Psoas muscle (tissue), 8 donors: ENCODE measurements at regions of chr15 and their contacts with region 1.

Region 1: GRCh38 chr15:32884146-32884545 is 166.3 kb downstream of the GREM1 start:
- DNase-seq: no peak
- ATAC-seq: no peak
- H3K4me3 ChIP-seq: no peak overlapping the region
- H3K27ac ChIP-seq: no peak overlapping the region
- H3K4me1 ChIP-seq: no peaks in the 10 kb centered on the region
- H3K27me3 ChIP-seq: no peaks in the 10 kb centered on the region
- CTCF ChIP-seq: no peak

Region 2: DNA sequence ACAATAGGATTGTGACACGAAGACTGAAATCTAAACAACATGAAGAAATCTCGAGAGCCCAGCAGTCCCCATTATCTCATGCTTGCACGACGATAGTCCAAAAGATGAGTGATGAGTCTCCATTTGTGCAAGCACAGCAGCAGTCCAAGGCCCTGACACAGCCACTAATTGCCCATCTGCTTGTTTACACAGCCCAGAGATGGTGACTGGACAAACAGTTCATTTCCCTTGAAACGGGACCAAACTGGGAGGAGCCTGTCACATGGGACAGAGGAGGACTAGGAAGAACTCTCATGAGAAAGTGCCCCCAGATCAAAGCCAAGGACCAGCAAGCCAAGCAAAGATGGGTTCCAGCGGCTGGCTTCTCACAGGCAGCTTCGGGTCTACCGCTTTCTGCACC is 45.3 kb before region 1 on chr15:
- intact Hi-C with region 1: no loop called
- DNase-seq: peak; percentile 34 to 59
- ATAC-seq: peak; percentile 20 to 74 (median 35)
- H3K4me3 ChIP-seq: no peak overlapping the region
- H3K27ac ChIP-seq: no peak overlapping the region
- H3K4me1 ChIP-seq: no peaks in the 10 kb centered on the region
- H3K27me3 ChIP-seq: peaks cover 0 to 2% (median 2%) of the 10 kb centered on the region in 3 donors
- CTCF ChIP-seq: no peak

Region 3: DNA sequence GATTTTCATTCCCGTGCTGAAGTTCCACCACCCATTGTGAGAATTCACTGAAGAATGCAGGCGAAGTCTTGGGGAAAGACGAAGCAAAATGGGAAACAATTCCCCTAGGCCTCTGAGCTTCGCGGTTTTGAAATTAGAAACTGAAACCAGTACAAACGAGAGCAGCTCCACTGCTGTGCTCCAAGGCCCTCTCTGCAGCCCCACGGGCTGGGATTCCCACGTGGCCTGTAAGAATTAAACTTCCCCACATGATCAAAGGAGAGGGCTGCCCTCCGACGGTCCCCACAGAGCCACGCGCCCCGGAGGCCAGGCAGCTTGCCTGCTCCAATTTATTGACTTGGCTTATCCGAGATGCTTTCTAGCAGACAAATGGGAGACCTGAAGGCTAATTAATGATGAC is 22.4 kb before region 1 on chr15:
- intact Hi-C with region 1: no loop called
- DNase-seq: peak; percentile 22 to 58
- ATAC-seq: peak in 3 of 4 donors; percentile 33 to 62 (median 36)
- H3K4me3 ChIP-seq: peak overlapping the region; percentile 20
- H3K27ac ChIP-seq: no peak overlapping the region
- H3K4me1 ChIP-seq: no peaks in the 10 kb centered on the region
- H3K27me3 ChIP-seq: no peaks in the 10 kb centered on the region
- CTCF ChIP-seq: no peak

Region 4: DNA sequence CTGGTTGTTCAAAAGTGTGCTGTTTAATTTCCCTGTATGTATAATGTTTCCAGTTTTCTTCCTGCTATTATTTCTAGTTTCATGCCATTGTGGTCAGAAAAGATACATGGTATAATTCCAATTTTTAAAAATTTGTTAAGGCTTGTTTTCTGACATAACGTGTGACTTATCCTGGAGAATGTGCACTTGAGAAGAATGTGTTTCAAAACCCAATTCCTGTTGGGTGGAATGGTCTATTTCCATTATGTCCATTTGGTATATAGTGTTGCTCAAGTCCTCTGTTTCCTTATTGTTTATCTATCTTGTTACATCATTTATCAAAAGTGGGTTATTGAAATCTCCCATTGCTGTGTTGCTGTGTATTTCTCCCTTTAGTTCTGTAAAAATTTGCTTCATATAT is 49.1 kb after region 1 on chr15:
- intact Hi-C with region 1: loop called in 1 of 2 experiments (anchors 2 kb)
- DNase-seq: no peak
- ATAC-seq: no peak
- H3K4me3 ChIP-seq: no peak overlapping the region
- H3K27ac ChIP-seq: no peak overlapping the region
- H3K4me1 ChIP-seq: no peaks in the 10 kb centered on the region
- H3K27me3 ChIP-seq: no peaks in the 10 kb centered on the region
- CTCF ChIP-seq: no peak

Region 5: DNA sequence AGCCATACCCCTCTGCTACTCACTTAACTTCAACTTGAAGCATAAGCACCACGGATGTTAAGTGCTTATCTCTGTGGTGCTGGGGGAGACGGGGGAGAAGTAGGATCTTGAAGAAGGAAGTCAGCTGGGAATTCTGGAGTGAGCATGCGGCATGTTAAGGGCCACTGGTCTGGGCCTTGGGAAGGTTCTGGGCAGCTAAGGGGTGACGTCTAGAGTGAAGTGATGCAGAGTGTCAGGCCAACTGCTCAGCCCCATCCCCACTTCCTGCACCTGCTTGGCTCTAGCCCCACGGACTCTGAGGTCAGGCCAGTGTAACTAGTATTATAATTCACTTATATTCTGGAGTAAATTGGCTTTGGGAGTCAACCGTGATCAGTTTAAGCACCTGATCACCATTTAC is 81.8 kb after region 1 on chr15:
- intact Hi-C with region 1: loop called in 1 of 2 experiments (anchors 10 kb)
- DNase-seq: no peak
- ATAC-seq: no peak
- H3K4me3 ChIP-seq: no peak overlapping the region
- H3K27ac ChIP-seq: no peak overlapping the region
- H3K4me1 ChIP-seq: no peaks in the 10 kb centered on the region
- H3K27me3 ChIP-seq: no peaks in the 10 kb centered on the region
- CTCF ChIP-seq: no peak

Region 6: DNA sequence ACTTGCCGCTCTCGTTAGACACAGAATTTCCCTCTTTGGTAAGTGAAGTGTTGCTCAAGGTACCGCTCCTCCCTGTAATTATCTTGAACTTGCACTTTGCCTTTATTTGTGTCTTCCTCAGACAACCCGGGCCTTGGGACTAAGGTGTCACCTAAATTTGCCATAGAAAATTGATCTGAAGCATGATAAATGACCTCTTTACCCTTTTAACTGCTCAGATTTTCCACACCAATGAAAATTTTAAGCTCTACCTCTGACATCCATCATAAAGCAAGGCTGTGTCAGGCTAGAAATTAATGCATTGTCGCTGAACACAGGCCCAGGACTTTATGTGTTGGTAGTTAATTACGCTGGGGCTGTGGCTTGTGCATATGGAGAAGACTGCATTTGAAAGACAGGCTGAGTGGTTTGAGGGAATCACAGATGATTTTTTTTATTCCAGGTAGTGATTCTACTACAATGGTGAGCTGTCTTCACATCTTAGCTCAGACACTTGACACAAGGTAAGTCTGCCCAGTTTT is 884.6 kb after region 1 on chr15:
- intact Hi-C with region 1: no loop called
- DNase-seq: no peak
- ATAC-seq: no peak
- H3K4me3 ChIP-seq: no peak overlapping the region
- H3K27ac ChIP-seq: no peak overlapping the region
- H3K4me1 ChIP-seq: no peaks in the 10 kb centered on the region
- H3K27me3 ChIP-seq: no peaks in the 10 kb centered on the region
- CTCF ChIP-seq: no peak